Activated CD4-positive, alpha-beta memory T cell treated with anti-CD3 and anti-CD28 coated beads for 36 hours (primary cell): ENCODE measurements at regions of chr13 and their contacts with region 1.

Region 1: DNA sequence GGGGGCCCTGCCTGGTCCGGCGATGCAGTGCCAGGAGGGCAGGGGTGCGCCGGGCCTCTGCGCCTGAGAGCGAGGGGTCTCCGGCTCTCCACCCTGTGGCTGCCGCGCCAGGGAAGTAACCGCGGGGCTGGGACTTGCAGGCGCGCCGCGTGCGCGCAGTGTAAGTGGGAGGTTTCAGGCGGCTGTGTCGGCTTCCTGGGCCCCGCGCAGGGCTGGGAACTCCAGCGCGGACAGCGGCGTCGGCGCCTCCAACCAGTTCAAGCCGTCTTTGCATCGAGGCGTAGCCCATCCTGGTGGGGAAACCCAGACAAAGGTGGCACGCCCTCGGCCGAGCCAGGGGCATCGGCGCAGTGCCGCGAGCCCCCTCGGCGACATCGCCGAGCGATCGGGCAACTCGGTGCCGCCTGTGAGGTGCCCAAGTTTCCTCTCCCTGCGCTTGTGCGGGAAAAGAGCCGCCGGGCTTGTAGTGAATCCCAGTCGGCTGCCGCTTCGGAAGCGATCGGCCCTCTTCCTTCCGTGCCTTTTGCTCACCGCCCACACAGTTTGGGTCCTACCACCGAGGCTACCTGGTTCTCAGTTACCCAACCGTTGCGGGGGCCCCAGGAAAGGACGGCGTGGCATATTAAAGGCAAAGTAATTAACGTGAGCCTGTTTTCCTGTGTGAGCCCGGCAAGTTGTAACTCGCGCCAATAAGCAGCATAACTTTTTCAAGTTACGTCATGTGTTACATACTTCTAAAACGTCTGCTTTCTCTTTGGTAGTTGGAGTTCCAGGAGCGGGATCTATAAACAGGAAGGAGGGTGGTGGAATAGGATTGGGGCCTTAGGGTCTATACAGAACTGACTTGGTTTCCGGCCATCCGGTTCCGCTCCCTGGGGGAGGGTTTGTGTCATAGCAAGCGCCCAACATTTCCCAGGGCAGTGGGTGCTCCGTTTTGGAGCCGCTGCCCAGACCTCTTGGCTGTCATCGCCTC is 1.2 kb downstream of the LRCH1 start:
- DNase-seq: peak; percentile 82
- H3K4me3 Mint-ChIP-seq: peak overlapping the region; percentile 90
- H3K27ac Mint-ChIP-seq: peak overlapping the region; percentile 87
- H3K4me1 Mint-ChIP-seq: peaks cover 39% of the 10 kb centered on the region
- H3K27me3 Mint-ChIP-seq: no peaks in the 10 kb centered on the region

Region 2: GRCh38 chr13:46392967-46393366 is 161.2 kb before region 1 on chr13:
- CTCF ChIA-PET with region 1: no interaction called
- POLR2A ChIA-PET with region 1: no interaction called
- intact Hi-C with region 1: no loop called
- DNase-seq: no peak
- H3K4me3 Mint-ChIP-seq: no peak overlapping the region
- H3K27ac Mint-ChIP-seq: no peak overlapping the region
- H3K4me1 Mint-ChIP-seq: peaks cover 16% of the 10 kb centered on the region
- H3K27me3 Mint-ChIP-seq: peaks cover 2% of the 10 kb centered on the region

Region 3: GRCh38 chr13:46492946-46493345 is 61.2 kb before region 1 on chr13:
- CTCF ChIA-PET with region 1: interaction called, 4 read pairs
- POLR2A ChIA-PET with region 1: no interaction called
- intact Hi-C with region 1: loop called (anchors 2 kb)
- DNase-seq: no peak
- H3K4me3 Mint-ChIP-seq: no peak overlapping the region
- H3K27ac Mint-ChIP-seq: no peak overlapping the region
- H3K4me1 Mint-ChIP-seq: no peaks in the 10 kb centered on the region
- H3K27me3 Mint-ChIP-seq: peaks cover 4% of the 10 kb centered on the region

Region 4: DNA sequence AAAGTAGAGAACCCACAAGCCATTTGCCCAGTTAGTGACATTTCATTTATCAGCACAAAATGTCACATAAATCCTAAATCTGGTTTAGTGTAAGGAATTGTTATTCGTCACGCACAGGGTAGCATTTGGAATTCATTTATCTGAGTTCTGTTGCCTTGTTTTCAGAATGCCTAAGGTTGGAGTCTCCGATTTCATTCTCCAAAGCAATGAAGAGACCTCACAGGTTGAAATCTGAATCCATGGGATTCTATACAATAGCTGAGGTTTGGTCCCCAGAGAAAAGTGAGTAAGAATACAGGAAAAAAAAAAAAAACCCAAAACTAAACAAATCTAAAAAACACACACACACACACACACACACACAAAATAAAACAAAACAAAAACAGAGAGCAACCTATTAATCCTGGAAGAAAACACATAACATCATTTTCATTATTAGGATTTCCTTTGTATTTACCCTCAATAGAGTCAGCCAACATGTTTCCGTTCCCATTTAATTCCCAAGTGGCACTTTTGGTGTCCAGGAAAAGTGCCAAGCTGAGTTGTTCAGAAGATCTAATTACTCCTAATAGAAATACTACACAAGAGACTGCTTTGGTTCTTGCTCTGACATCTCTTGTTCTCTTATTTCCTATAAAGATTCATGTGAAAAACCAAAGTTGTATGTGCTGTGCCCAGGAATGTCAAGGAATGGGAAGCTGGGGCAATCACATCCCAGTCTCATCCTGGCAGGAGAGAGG is 37.4 kb before region 1 on chr13:
- CTCF ChIA-PET with region 1: no interaction called
- POLR2A ChIA-PET with region 1: no interaction called
- intact Hi-C with region 1: no loop called
- DNase-seq: no peak
- H3K4me3 Mint-ChIP-seq: no peak overlapping the region
- H3K27ac Mint-ChIP-seq: no peak overlapping the region
- H3K4me1 Mint-ChIP-seq: no peaks in the 10 kb centered on the region
- H3K27me3 Mint-ChIP-seq: peaks cover 7% of the 10 kb centered on the region

Region 5: DNA sequence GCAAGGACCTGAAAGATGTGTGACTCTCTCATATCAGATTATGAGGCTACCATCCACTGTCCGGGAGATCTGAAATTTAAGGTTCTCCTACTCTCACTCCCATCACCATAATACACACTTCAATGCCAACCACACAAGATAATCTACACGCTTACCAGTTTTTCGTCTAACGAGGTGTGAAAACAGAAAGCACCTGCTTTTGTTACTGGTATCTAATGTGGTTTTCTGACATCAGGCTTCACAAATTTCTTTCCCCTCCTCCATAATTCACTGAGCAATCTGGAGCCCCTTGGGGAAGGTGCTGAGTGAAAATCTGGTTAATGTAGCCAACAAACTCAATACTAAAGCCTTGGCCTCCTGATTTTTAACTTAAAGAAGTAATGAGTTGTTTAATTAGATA is 11.3 kb before region 1 on chr13:
- CTCF ChIA-PET with region 1: interaction called, 12 read pairs
- POLR2A ChIA-PET with region 1: no interaction called
- intact Hi-C with region 1: no loop called
- DNase-seq: no peak
- H3K4me3 Mint-ChIP-seq: no peak overlapping the region
- H3K27ac Mint-ChIP-seq: no peak overlapping the region
- H3K4me1 Mint-ChIP-seq: no peaks in the 10 kb centered on the region
- H3K27me3 Mint-ChIP-seq: peaks cover 3% of the 10 kb centered on the region

Region 6: GRCh38 chr13:46595136-46595886 is 41.1 kb after region 1 on chr13:
- CTCF ChIA-PET with region 1: interaction called, 26 read pairs
- POLR2A ChIA-PET with region 1: interaction called, 3 read pairs
- intact Hi-C with region 1: loop called (anchors 1 kb)
- DNase-seq: no peak
- H3K4me3 Mint-ChIP-seq: no peak overlapping the region
- H3K27ac Mint-ChIP-seq: no peak overlapping the region
- H3K4me1 Mint-ChIP-seq: peaks cover 76% of the 10 kb centered on the region
- H3K27me3 Mint-ChIP-seq: no peaks in the 10 kb centered on the region

Region 7: GRCh38 chr13:46668302-46668720 is 114.1 kb after region 1 on chr13:
- CTCF ChIA-PET with region 1: interaction called, 14 read pairs
- POLR2A ChIA-PET with region 1: no interaction called
- intact Hi-C with region 1: loop called (anchors 1 kb)
- DNase-seq: peak; percentile 53
- H3K4me3 Mint-ChIP-seq: peak overlapping the region; percentile 76
- H3K27ac Mint-ChIP-seq: peak overlapping the region; percentile 82
- H3K4me1 Mint-ChIP-seq: peaks cover 37% of the 10 kb centered on the region
- H3K27me3 Mint-ChIP-seq: no peaks in the 10 kb centered on the region

Region 8: GRCh38 chr13:46712524-46712923 is 158.4 kb after region 1 on chr13:
- CTCF ChIA-PET with region 1: interaction called, 23 read pairs
- POLR2A ChIA-PET with region 1: no interaction called
- intact Hi-C with region 1: no loop called
- DNase-seq: no peak
- H3K4me3 Mint-ChIP-seq: no peak overlapping the region
- H3K27ac Mint-ChIP-seq: no peak overlapping the region
- H3K4me1 Mint-ChIP-seq: no peaks in the 10 kb centered on the region
- H3K27me3 Mint-ChIP-seq: no peaks in the 10 kb centered on the region

Region 9: DNA sequence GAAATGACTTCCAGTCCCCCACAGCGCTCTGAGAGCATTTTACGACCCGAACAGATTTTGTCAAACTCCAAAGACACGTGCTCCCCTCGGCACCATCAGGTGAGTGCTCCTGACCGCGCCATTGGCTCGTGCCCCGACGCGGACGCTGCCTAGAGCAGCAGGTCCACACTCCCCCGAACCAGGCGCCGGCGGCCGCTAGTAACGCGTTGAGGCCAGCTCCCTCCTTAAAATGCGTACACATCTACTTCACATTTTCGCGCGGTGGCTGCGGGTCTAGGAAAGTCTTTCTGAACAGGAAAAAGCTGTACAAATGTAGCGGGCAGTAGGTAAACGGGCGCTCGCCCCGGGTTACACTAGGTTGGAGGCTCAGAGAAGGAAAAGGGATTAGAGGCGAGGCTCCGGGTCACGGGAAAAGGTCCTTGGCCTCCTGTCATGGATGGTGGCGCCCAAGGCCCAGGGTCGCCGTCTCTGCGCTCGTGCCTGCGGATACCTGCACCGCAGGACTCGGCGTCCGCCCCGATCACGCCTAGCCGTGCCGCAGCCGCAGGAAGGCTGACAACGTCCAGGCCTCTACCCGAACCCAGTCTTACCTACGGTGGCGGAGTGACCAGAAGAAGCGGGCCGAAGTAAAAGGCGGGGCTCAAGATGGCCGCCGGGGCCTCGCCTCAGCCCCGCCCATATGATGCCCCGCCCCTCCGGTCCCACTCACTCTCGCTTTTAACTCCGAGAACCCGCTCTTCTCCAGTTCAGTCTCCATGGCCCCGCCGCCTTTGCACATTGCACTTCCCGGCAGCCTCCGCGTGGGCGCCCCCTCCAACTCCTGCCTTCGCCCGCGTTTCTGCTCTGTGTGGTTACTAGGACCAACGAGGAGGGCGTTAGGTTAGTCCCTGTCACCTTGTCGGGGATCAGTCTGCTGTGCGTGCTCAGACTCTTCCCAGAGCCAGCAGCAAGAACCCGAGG is 242.6 kb after region 1 on chr13 and contains the start of gene ESD:
- CTCF ChIA-PET with region 1: interaction called, 5 read pairs
- POLR2A ChIA-PET with region 1: interaction called, 3 read pairs
- intact Hi-C with region 1: loop called (anchors 1 kb)
- DNase-seq: peak; percentile 97
- H3K4me3 Mint-ChIP-seq: peak within 1 kb of the TSS; percentile 95
- H3K27ac Mint-ChIP-seq: peak within 1 kb of the TSS; percentile 96
- H3K4me1 Mint-ChIP-seq: peaks cover 38% of the 10 kb centered on the region
- H3K27me3 Mint-ChIP-seq: no peaks in the 10 kb centered on the region
- total RNA-seq, gene ESD: 137 to 146 TPM

Region 10: GRCh38 chr13:47511647-47512046 is 957.5 kb after region 1 on chr13:
- CTCF ChIA-PET with region 1: no interaction called
- POLR2A ChIA-PET with region 1: no interaction called
- intact Hi-C with region 1: no loop called
- DNase-seq: no peak
- H3K4me3 Mint-ChIP-seq: no peak overlapping the region
- H3K27ac Mint-ChIP-seq: no peak overlapping the region
- H3K4me1 Mint-ChIP-seq: no peaks in the 10 kb centered on the region
- H3K27me3 Mint-ChIP-seq: no peaks in the 10 kb centered on the region